ENCODE measurements at regions of chr19 and their contacts with region 1.

Region 1: GRCh38 chr19:1672038-1672768 is 19.8 kb upstream of the TCF3 start:
- DNase-seq: peak; percentile 81 to 84 (median 83)
- ATAC-seq: peak; percentile 85
- H3K4me3 ChIP-seq: peak overlapping the region; percentile 51
- H3K27ac ChIP-seq: peak overlapping the region; percentile 81
- H3K4me1 ChIP-seq: peaks cover 17 to 76% of the 10 kb centered on the region in 2 experiments
- H3K27me3 ChIP-seq: no peaks in the 10 kb centered on the region
- CTCF ChIP-seq: peak; percentile 91 to 92 (median 91)
- EP300 ChIP-seq: no peak
- POLR2A ChIP-seq: no peak
- RAD21 ChIP-seq: peak; percentile 98 to 99

Region 2: GRCh38 chr19:1103708-1104310 is 568.4 kb before region 1 on chr19 and contains the start of gene GPX4:
- CTCF ChIA-PET with region 1: no interaction called
- POLR2A ChIA-PET with region 1: no interaction called
- in situ Hi-C with region 1: no loop called
- intact Hi-C with region 1: no loop called
- DNase-seq: peak; percentile 95 to 100 (median 97)
- ATAC-seq: peak; percentile 95
- H3K4me3 ChIP-seq: peak within 1 kb of the TSS; percentile 97
- H3K27ac ChIP-seq: peak within 1 kb of the TSS; percentile 98
- H3K4me1 ChIP-seq: peaks cover 27 to 70% of the 10 kb centered on the region in 2 experiments
- H3K27me3 ChIP-seq: no peaks in the 10 kb centered on the region
- CTCF ChIP-seq: no peak
- EP300 ChIP-seq: no peak
- POLR2A ChIP-seq: peak; percentile 97
- RAD21 ChIP-seq: no peak
- polyA plus RNA-seq, gene GPX4: 61.4 to 125 TPM

Region 3: GRCh38 chr19:1540365-1540925 is 131.8 kb before region 1 on chr19:
- CTCF ChIA-PET with region 1: interaction called, 33 read pairs
- POLR2A ChIA-PET with region 1: interaction called, 3 read pairs
- in situ Hi-C with region 1: no loop called
- intact Hi-C with region 1: no loop called
- DNase-seq: no peak
- ATAC-seq: no peak
- H3K4me3 ChIP-seq: no peak overlapping the region
- H3K27ac ChIP-seq: no peak overlapping the region
- H3K4me1 ChIP-seq: peaks cover 8 to 17% of the 10 kb centered on the region in 2 experiments
- H3K27me3 ChIP-seq: no peaks in the 10 kb centered on the region; a peak in 1 of 5 replicates
- CTCF ChIP-seq: no peak
- EP300 ChIP-seq: no peak
- POLR2A ChIP-seq: no peak
- RAD21 ChIP-seq: no peak

Region 4: GRCh38 chr19:1605236-1606137 is 66.7 kb before region 1 on chr19 and contains the start of gene UQCR11:
- CTCF ChIA-PET with region 1: interaction called, 23 read pairs
- POLR2A ChIA-PET with region 1: no interaction called
- in situ Hi-C with region 1: no loop called
- intact Hi-C with region 1: loop called (anchors 2 kb)
- DNase-seq: peak; percentile 97 to 98 (median 98)
- ATAC-seq: peak; percentile 93
- H3K4me3 ChIP-seq: peak within 1 kb of the TSS; percentile 99
- H3K27ac ChIP-seq: peak within 1 kb of the TSS; percentile 94
- H3K4me1 ChIP-seq: peaks cover 26 to 76% of the 10 kb centered on the region in 2 experiments
- H3K27me3 ChIP-seq: no peaks in the 10 kb centered on the region
- CTCF ChIP-seq: peak; percentile 75 to 79 (median 78)
- EP300 ChIP-seq: no peak
- POLR2A ChIP-seq: peak; percentile 83
- RAD21 ChIP-seq: peak; percentile 75 to 81
- polyA plus RNA-seq, gene UQCR11: 225 to 394 TPM

Region 5: GRCh38 chr19:1767464-1767933 is 95.3 kb after region 1 on chr19:
- CTCF ChIA-PET with region 1: interaction called, 84 read pairs
- POLR2A ChIA-PET with region 1: interaction called, 7 read pairs
- in situ Hi-C with region 1: loop called (anchors 5 kb)
- intact Hi-C with region 1: loop called (anchors 1 kb)
- DNase-seq: peak; percentile 80 to 94 (median 90)
- ATAC-seq: peak; percentile 90
- H3K4me3 ChIP-seq: no peak overlapping the region
- H3K27ac ChIP-seq: no peak overlapping the region; the same call in 2 of the 3 replicates
- H3K4me1 ChIP-seq: peaks cover 9 to 51% of the 10 kb centered on the region in 2 experiments; a peak in 4 of 5 replicates
- H3K27me3 ChIP-seq: peaks cover 0 to 10% of the 10 kb centered on the region in 2 experiments; a peak in 4 of 5 replicates
- CTCF ChIP-seq: peak; percentile 90 to 94 (median 93)
- EP300 ChIP-seq: no peak
- POLR2A ChIP-seq: no peak
- RAD21 ChIP-seq: peak; percentile 92 to 97

Region 6: DNA sequence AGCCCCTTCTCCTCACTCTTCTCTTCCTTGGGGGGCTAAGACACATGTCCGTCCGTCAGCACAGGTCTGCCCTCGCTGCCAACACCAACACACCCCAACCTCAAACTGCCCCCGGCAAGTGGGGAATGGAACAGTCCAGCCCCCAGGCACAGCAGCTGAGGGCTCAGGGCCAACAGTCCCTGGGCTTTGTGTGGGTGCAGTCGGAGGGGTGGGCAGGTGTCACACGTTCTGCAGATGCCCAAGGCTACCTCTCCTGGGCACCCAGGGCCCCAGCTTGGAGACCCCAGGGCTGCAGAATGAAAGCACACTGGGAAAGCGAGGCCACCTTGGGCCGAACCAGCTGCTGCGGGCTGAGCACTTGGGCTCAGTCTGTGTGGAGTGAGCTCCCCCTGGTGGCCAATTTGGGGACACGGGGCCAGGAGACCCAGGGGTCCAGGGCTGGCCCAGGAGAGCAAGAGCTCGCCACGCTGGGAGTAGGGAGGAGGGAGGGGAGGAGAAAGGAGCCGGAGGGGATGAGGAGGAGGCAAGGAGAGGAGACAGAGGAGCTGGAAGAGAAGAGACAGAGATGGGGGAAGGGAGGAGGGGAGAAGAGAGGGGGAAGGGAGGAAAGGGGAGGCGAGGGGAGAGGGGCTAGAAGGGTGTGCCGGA is 153.8 kb after region 1 on chr19:
- CTCF ChIA-PET with region 1: interaction called, 12 read pairs
- POLR2A ChIA-PET with region 1: no interaction called
- in situ Hi-C with region 1: no loop called
- intact Hi-C with region 1: no loop called
- DNase-seq: peak; percentile 85 to 93 (median 88)
- ATAC-seq: peak; percentile 91
- H3K4me3 ChIP-seq: peak overlapping the region; percentile 42
- H3K27ac ChIP-seq: peak overlapping the region; percentile 67
- H3K4me1 ChIP-seq: peaks cover 11 to 64% of the 10 kb centered on the region in 2 experiments
- H3K27me3 ChIP-seq: no peaks in the 10 kb centered on the region
- CTCF ChIP-seq: peak; percentile 80 to 95 (median 90)
- EP300 ChIP-seq: no peak
- POLR2A ChIP-seq: no peak
- RAD21 ChIP-seq: peak; percentile 77 to 78